ENCODE measurements at regions of chr17 and their contacts with region 1.

Region 1: DNA sequence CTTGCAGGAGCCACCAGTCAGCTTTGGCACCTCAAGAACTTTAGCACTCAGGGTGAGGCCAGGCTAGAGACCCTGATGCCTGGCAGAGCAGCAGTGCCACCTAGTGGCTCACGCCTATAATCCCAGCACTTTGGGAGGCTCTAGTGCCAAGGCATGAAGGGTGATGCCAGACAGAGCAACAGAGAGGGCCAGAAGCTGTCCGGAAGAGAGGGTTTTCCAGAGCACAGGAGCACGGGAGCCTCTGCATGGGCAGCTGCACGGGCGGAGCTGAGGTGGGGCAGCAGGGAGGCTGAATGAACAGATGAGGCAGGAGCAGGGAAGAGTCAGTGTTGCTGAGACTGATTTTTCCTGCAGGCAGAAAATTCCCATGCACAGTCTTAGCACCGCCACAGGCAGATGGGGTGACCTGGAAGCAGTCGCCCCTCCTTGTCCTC is 38.9 kb downstream of the MYH3 start:
- DNase-seq: no peak
- H3K4me3 ChIP-seq: no peak overlapping the region
- CTCF ChIP-seq: peak; percentile 92

Region 2: GRCh38 chr17:10286324-10286723 is 331.9 kb before region 1 on chr17:
- CTCF ChIA-PET with region 1: interaction called, 300 read pairs
- POLR2A ChIA-PET with region 1: no interaction called
- DNase-seq: no peak
- H3K4me3 ChIP-seq: no peak overlapping the region
- CTCF ChIP-seq: no peak

Region 3: GRCh38 chr17:10309003-10309834 is 309.0 kb before region 1 on chr17:
- CTCF ChIA-PET with region 1: interaction called, 128 read pairs
- POLR2A ChIA-PET with region 1: no interaction called
- DNase-seq: no peak
- H3K4me3 ChIP-seq: no peak overlapping the region
- CTCF ChIP-seq: no peak

Region 4: GRCh38 chr17:10327640-10328039 is 290.6 kb before region 1 on chr17:
- CTCF ChIA-PET with region 1: interaction called, 667 read pairs
- POLR2A ChIA-PET with region 1: no interaction called
- DNase-seq: no peak
- H3K4me3 ChIP-seq: no peak overlapping the region
- CTCF ChIP-seq: peak; percentile 85

Region 5: GRCh38 chr17:10429421-10430045 is 188.7 kb before region 1 on chr17:
- CTCF ChIA-PET with region 1: no interaction called
- POLR2A ChIA-PET with region 1: no interaction called
- DNase-seq: no peak
- H3K4me3 ChIP-seq: no peak overlapping the region
- CTCF ChIP-seq: no peak

Region 6: DNA sequence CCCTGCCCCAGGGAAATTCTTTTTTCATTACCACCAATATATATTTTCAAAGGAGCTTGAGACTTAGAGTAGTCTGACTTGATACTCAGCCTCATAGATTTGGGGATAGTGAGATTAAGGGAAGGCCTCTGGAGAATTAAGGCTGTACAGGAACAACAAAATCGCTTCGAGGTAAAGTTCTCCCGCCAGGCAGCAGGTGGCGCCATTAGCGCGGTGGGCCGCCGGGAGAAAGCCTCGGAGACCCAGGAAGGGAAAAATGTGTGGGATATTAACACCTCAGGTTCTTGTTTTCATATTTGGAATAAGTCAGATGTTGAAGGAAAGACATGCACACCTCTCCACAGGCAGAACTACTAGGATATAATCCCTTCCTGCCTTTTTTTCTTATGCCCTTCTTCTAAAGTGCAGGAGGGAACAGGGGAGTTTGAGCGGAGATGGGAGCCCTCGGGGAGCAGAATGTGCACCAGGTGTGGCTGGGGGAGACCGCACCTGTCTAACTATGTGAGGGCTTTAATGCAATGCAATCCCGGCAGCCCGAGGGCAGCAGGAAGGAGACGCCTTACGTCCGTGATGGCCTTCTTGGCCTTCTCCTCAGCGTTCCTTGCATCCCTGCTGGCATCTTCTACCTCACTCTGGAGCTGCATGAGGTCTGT is 13.0 kb after region 1 on chr17:
- CTCF ChIA-PET with region 1: interaction called, 192 read pairs
- POLR2A ChIA-PET with region 1: no interaction called
- DNase-seq: no peak
- H3K4me3 ChIP-seq: no peak overlapping the region
- CTCF ChIP-seq: peak; percentile 82

Region 7: DNA sequence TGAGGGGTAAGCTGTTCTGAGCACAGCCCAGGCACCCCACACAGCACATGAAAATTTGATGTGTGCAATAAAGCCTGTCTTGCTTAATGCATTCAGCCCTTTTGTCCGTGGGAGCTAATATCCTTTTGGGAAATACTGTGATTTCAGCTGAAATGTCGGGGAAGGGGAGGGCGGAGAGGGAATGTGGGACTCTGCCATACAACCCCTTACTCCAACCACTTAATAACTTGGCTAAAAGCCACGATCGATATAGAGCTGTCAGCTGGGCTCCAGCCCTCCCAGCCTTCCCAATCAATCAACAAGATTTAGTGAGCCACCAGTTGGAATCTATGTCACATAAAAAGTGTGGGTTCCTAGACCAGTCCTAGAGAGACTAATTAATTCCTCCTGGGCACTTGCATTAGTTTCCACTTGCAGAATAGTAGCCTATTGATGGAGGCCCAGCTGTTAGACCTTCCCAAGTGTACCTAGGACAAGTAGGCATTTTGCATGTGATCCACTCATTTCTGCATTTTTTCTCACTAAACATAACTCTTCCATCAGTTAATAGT is 302.4 kb after region 1 on chr17:
- CTCF ChIA-PET with region 1: no interaction called
- POLR2A ChIA-PET with region 1: no interaction called
- DNase-seq: no peak
- H3K4me3 ChIP-seq: no peak overlapping the region
- CTCF ChIP-seq: no peak